CD8-positive, alpha-beta T cell (primary cell): ENCODE measurements at regions of chr21 and their contacts with region 1.

Region 1: GRCh38 chr21:15729674-15730483 is at the start of gene USP25:
- DNase-seq: peak; percentile 79 to 94 (median 87)
- ATAC-seq: peak; percentile 79
- H3K4me3 ChIP-seq: peak within 1 kb of the TSS; percentile 59 to 68
- H3K4me3 Mint-ChIP-seq: peak within 1 kb of the TSS; percentile 95
- H3K27ac ChIP-seq: peak within 1 kb of the TSS; percentile 69 to 73
- H3K27ac Mint-ChIP-seq: peak within 1 kb of the TSS; percentile 94
- H3K4me1 ChIP-seq: peaks cover 37% of the 10 kb centered on the region
- H3K4me1 Mint-ChIP-seq: peaks cover 41% of the 10 kb centered on the region
- H3K27me3 ChIP-seq: no peaks in the 10 kb centered on the region
- H3K27me3 Mint-ChIP-seq: no peaks in the 10 kb centered on the region
- CTCF ChIP-seq: no peak
- total RNA-seq, gene USP25: 49.8 to 54.7 TPM

Region 2: GRCh38 chr21:14382835-14383594 is 1346.9 kb before region 1 on chr21 and contains the start of gene HSPA13:
- CTCF ChIA-PET with region 1: no interaction called
- POLR2A ChIA-PET with region 1: no interaction called
- intact Hi-C with region 1: loop called (anchors 1 to 5 kb)
- DNase-seq: peak; percentile 97 to 100 (median 99)
- ATAC-seq: peak; percentile 91
- H3K4me3 ChIP-seq: peak within 1 kb of the TSS; percentile 65 to 92
- H3K4me3 Mint-ChIP-seq: peak within 1 kb of the TSS; percentile 100
- H3K27ac ChIP-seq: peak within 1 kb of the TSS; percentile 94 to 96
- H3K27ac Mint-ChIP-seq: peak within 1 kb of the TSS; percentile 100
- H3K4me1 ChIP-seq: peaks cover 24% of the 10 kb centered on the region
- H3K4me1 Mint-ChIP-seq: peaks cover 40% of the 10 kb centered on the region
- H3K27me3 ChIP-seq: no peaks in the 10 kb centered on the region
- H3K27me3 Mint-ChIP-seq: no peaks in the 10 kb centered on the region
- CTCF ChIP-seq: no peak
- total RNA-seq, gene HSPA13: 54.3 to 58.1 TPM

Region 3: GRCh38 chr21:14675774-14676530 is 1053.9 kb before region 1 on chr21:
- CTCF ChIA-PET with region 1: no interaction called
- POLR2A ChIA-PET with region 1: no interaction called
- intact Hi-C with region 1: loop called in 1 of 2 experiments (anchors 5 kb)
- DNase-seq: peak in 7 of 9 experiments; percentile 4 to 77 (median 26)
- ATAC-seq: peak; percentile 90
- H3K4me3 ChIP-seq: no peak overlapping the region
- H3K4me3 Mint-ChIP-seq: peak overlapping the region; percentile 45
- H3K27ac ChIP-seq: peak overlapping the region; percentile 45 to 85
- H3K27ac Mint-ChIP-seq: peak overlapping the region; percentile 93
- H3K4me1 ChIP-seq: peaks cover 31% of the 10 kb centered on the region
- H3K4me1 Mint-ChIP-seq: peaks cover 52% of the 10 kb centered on the region
- H3K27me3 ChIP-seq: no peaks in the 10 kb centered on the region
- H3K27me3 Mint-ChIP-seq: no peaks in the 10 kb centered on the region
- CTCF ChIP-seq: no peak

Region 4: GRCh38 chr21:15514073-15514946 is 215.6 kb before region 1 on chr21:
- CTCF ChIA-PET with region 1: no interaction called
- POLR2A ChIA-PET with region 1: no interaction called
- intact Hi-C with region 1: loop called (anchors 2 to 10 kb)
- DNase-seq: peak; percentile 11 to 84 (median 65)
- ATAC-seq: peak; percentile 99
- H3K4me3 ChIP-seq: peak overlapping the region in 1 of 2 experiments; percentile 0
- H3K4me3 Mint-ChIP-seq: peak overlapping the region; percentile 39
- H3K27ac ChIP-seq: peak overlapping the region; percentile 33 to 78
- H3K27ac Mint-ChIP-seq: peak overlapping the region; percentile 85
- H3K4me1 ChIP-seq: peaks cover 25% of the 10 kb centered on the region
- H3K4me1 Mint-ChIP-seq: peaks cover 25% of the 10 kb centered on the region
- H3K27me3 ChIP-seq: no peaks in the 10 kb centered on the region
- H3K27me3 Mint-ChIP-seq: no peaks in the 10 kb centered on the region
- CTCF ChIP-seq: no peak

Region 5: GRCh38 chr21:15679630-15680029 is 50.2 kb before region 1 on chr21:
- CTCF ChIA-PET with region 1: no interaction called
- POLR2A ChIA-PET with region 1: no interaction called
- intact Hi-C with region 1: no loop called
- DNase-seq: peak in 3 of 9 experiments; percentile 8 to 28 (median 18)
- ATAC-seq: no peak
- H3K4me3 ChIP-seq: no peak overlapping the region
- H3K4me3 Mint-ChIP-seq: no peak overlapping the region
- H3K27ac ChIP-seq: no peak overlapping the region
- H3K27ac Mint-ChIP-seq: no peak overlapping the region
- H3K4me1 ChIP-seq: no peaks in the 10 kb centered on the region
- H3K4me1 Mint-ChIP-seq: peaks cover 5% of the 10 kb centered on the region
- H3K27me3 ChIP-seq: no peaks in the 10 kb centered on the region
- H3K27me3 Mint-ChIP-seq: no peaks in the 10 kb centered on the region
- CTCF ChIP-seq: no peak

Region 6: DNA sequence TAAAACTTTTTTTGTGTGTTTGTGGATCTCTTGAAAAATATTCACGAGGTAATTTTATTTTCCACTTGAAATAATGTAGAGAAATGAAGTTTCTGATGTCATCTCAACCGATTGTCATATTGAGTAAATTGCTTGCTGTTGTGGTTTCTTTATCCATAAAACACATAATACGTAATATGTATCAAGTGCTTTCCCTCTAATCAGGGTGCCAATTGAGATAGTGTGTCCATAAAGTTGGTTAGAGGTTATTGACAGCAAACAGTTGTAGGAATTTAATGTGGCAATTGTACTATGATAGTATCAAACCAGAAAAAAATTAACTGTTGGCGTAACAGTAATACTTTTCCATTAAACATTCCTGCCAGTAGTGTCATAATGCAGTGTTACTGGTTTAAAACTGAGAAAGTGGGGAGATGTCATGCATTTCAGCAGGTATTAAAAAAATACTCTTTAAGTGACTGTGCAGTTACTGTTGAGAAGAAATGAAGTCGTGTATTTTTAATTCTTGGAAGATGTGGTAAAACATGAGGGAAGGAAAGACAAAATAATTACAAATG is 38.2 kb after region 1 on chr21:
- CTCF ChIA-PET with region 1: no interaction called
- POLR2A ChIA-PET with region 1: interaction called, 3 read pairs
- intact Hi-C with region 1: loop called (anchors 5 kb)
- DNase-seq: no peak
- ATAC-seq: no peak
- H3K4me3 ChIP-seq: no peak overlapping the region
- H3K4me3 Mint-ChIP-seq: no peak overlapping the region
- H3K27ac ChIP-seq: no peak overlapping the region
- H3K27ac Mint-ChIP-seq: no peak overlapping the region
- H3K4me1 ChIP-seq: no peaks in the 10 kb centered on the region
- H3K4me1 Mint-ChIP-seq: peaks cover 76% of the 10 kb centered on the region
- H3K27me3 ChIP-seq: no peaks in the 10 kb centered on the region
- H3K27me3 Mint-ChIP-seq: no peaks in the 10 kb centered on the region
- CTCF ChIP-seq: no peak

Region 7: GRCh38 chr21:15797577-15798363 is 67.9 kb after region 1 on chr21:
- CTCF ChIA-PET with region 1: no interaction called
- POLR2A ChIA-PET with region 1: no interaction called
- intact Hi-C with region 1: loop called in 1 of 2 experiments (anchors 2 kb)
- DNase-seq: peak in 1 of 9 experiments; percentile 14
- ATAC-seq: no peak
- H3K4me3 ChIP-seq: no peak overlapping the region
- H3K4me3 Mint-ChIP-seq: no peak overlapping the region
- H3K27ac ChIP-seq: no peak overlapping the region
- H3K27ac Mint-ChIP-seq: peak overlapping the region; percentile 70
- H3K4me1 ChIP-seq: peaks cover 4% of the 10 kb centered on the region
- H3K4me1 Mint-ChIP-seq: peaks cover 65% of the 10 kb centered on the region
- H3K27me3 ChIP-seq: no peaks in the 10 kb centered on the region
- H3K27me3 Mint-ChIP-seq: no peaks in the 10 kb centered on the region
- CTCF ChIP-seq: no peak

Region 8: DNA sequence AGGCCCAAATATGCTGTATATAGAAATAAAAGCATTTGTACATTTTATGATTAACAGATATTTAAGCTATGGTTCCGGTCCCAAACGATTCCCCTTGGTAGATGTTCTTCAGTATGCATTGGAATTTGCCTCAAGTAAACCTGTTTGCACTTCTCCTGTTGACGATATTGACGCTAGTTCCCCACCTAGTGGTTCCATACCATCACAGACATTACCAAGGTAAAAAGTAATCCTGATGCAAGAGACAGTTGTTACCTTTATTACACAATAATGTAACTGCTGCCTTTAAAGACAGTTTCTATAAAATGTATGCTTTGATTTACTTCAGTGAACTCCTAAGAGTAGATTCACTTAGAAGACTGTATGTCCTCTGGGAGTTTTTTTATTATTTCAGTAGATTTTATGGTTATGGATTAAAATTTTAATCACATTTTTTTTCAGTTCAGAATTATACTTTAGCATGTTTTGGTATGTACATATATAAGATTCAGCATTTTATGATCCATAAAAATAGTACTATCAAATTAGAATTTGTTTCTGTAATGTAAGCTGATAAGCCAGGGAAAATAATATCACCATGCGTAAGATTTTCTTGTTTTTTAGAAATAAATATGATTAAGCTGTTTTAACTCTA is 96.4 kb after region 1 on chr21:
- CTCF ChIA-PET with region 1: interaction called, 5 read pairs
- POLR2A ChIA-PET with region 1: interaction called, 11 read pairs
- intact Hi-C with region 1: loop called (anchors 1 to 2 kb)
- DNase-seq: peak in 4 of 9 experiments; percentile 23 to 75 (median 48)
- ATAC-seq: peak; percentile 75
- H3K4me3 ChIP-seq: no peak overlapping the region
- H3K4me3 Mint-ChIP-seq: no peak overlapping the region
- H3K27ac ChIP-seq: no peak overlapping the region
- H3K27ac Mint-ChIP-seq: peak overlapping the region; percentile 3
- H3K4me1 ChIP-seq: peaks cover 26% of the 10 kb centered on the region
- H3K4me1 Mint-ChIP-seq: peaks cover 52% of the 10 kb centered on the region
- H3K27me3 ChIP-seq: no peaks in the 10 kb centered on the region
- H3K27me3 Mint-ChIP-seq: no peaks in the 10 kb centered on the region
- CTCF ChIP-seq: peak; percentile 72